Vagina (tissue), 2 donors: ENCODE measurements at regions of chr13 and their contacts with region 1.

Region 1: DNA sequence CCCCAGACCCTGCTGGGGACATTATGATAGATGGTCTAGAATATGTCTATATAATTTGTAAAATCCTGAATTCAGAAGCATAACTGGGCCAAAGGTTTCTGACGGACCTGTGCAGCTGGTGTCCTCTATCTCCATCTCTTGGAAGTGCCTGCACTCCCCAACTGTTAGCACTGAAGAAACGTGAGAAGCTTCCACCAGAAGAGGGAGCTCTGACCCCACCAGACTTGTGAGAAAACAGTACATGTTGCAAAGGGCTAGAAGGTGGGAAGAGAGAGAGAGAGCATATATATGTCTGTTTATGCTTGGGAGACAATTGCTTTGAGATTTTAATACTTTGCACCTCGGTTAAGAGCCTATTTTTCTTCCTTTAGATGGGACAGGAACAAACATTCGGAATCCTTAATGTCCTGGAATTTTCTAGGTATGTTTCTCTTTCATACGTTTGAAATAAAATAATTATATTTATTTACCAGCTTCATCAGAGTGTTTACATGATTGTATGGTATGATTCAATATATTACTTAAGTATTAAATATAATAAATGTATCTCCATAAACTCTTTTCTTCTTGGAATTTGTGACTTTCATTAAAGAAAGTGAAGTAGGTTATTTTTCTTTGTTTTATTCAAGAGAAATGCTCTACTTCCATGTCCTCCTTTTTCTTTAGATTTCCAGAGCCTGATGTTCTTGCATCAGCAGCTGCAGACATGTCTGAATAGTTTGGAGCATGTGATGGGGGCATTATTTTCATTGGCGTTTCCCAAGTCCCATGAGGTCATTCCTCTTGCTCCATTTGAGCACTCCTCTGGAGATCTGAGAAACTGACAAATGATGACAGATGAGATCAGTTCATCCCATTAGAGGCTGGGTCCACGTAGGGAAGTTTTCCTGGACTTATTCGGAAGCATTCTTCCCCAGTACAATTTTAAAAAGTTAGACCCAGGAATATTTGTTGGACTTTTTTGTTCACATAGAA is 202.9 kb downstream of the ATP8A2 start:
- DNase-seq: no peak
- H3K4me3 ChIP-seq: no peak overlapping the region
- H3K27ac ChIP-seq: no peak overlapping the region
- H3K4me1 ChIP-seq: no peaks in the 10 kb centered on the region
- H3K27me3 ChIP-seq: no peaks in the 10 kb centered on the region
- CTCF ChIP-seq: peak; percentile 53 to 80 (median 66)
- POLR2A ChIP-seq: no peak

Region 2: DNA sequence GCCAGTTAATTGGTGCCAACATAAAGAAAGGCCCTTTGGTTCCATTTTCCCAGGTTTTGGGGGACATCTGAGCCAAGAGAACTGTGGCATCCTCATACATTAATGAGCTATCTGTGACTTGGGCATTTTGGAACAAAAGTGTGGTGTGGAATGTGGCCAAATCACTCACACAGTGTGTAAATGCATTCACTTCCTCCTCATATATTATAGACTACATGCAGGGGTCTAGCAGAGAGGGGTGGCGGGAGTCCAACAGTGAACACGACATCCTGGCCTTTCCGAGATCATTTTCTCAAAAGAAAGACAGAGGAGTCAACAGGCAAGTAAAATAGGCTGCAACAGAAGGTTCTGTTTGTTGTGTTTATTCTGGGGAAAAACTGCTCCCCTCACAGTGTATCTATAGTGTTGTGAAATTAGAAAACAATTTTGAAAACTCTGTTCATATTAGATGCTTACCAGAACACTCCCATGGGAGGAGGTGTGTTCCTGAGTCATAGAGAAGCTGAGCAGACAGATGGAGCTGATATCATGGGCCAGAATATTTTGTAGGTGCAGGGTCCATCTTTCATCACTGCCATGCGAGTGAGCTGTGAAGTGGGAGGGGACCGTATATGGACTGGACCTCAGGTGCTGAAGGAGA is 441.9 kb before region 1 on chr13:
- intact Hi-C with region 1: no loop called
- DNase-seq: no peak
- H3K4me3 ChIP-seq: no peak overlapping the region
- H3K27ac ChIP-seq: no peak overlapping the region
- H3K4me1 ChIP-seq: no peaks in the 10 kb centered on the region
- H3K27me3 ChIP-seq: no peaks in the 10 kb centered on the region
- CTCF ChIP-seq: no peak
- POLR2A ChIP-seq: no peak

Region 3: GRCh38 chr13:25860845-25861244 is 286.1 kb after region 1 on chr13:
- intact Hi-C with region 1: no loop called
- DNase-seq: no peak
- H3K4me3 ChIP-seq: no peak overlapping the region
- H3K27ac ChIP-seq: no peak overlapping the region
- H3K4me1 ChIP-seq: no peaks in the 10 kb centered on the region
- H3K27me3 ChIP-seq: no peaks in the 10 kb centered on the region
- CTCF ChIP-seq: no peak
- POLR2A ChIP-seq: no peak

Region 4: DNA sequence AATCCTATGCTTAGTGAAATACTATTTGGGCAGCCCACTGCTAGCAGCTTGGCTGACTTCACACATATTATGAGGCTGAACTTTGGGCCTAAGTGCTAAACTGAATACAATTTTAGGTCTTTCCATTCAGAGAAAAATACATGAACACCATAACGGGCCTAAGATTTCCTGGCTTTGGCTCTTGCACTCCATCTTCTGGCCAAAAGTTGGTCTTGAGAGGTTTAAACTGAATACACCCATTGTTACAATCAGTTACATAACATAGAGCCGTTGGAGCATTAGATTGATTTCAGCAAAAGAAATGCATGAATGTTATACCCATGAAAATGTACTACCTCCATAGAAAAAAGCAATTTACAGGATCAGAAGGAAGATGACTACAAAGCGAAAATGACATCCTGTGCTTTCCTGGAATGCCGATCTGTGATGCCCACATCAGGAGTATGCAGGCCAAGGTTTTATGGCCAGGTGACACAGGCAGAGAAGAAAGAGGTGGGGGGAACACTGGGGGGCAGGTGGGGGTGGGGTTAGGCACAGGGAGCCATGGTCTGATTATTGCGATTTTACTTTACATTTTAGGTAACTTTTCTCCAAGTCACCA is 488.2 kb after region 1 on chr13:
- intact Hi-C with region 1: loop called (anchors 10 kb)
- DNase-seq: no peak
- H3K4me3 ChIP-seq: no peak overlapping the region
- H3K27ac ChIP-seq: no peak overlapping the region
- H3K4me1 ChIP-seq: no peaks in the 10 kb centered on the region
- H3K27me3 ChIP-seq: no peaks in the 10 kb centered on the region
- CTCF ChIP-seq: peak in 1 of 3 experiments; percentile 35
- POLR2A ChIP-seq: no peak